HEK293 (cell line): ENCODE measurements at regions of chr9 and their contacts with region 1.

Region 1: GRCh38 chr9:33473643-33474352 is at the start of gene NOL6:
- H3K4me3 ChIP-seq: peak within 1 kb of the TSS; percentile 91
- H3K27ac ChIP-seq: no peak within 1 kb of the TSS
- H3K4me1 ChIP-seq: no peaks in the 10 kb centered on the region
- CTCF ChIP-seq: no peak

Region 2: DNA sequence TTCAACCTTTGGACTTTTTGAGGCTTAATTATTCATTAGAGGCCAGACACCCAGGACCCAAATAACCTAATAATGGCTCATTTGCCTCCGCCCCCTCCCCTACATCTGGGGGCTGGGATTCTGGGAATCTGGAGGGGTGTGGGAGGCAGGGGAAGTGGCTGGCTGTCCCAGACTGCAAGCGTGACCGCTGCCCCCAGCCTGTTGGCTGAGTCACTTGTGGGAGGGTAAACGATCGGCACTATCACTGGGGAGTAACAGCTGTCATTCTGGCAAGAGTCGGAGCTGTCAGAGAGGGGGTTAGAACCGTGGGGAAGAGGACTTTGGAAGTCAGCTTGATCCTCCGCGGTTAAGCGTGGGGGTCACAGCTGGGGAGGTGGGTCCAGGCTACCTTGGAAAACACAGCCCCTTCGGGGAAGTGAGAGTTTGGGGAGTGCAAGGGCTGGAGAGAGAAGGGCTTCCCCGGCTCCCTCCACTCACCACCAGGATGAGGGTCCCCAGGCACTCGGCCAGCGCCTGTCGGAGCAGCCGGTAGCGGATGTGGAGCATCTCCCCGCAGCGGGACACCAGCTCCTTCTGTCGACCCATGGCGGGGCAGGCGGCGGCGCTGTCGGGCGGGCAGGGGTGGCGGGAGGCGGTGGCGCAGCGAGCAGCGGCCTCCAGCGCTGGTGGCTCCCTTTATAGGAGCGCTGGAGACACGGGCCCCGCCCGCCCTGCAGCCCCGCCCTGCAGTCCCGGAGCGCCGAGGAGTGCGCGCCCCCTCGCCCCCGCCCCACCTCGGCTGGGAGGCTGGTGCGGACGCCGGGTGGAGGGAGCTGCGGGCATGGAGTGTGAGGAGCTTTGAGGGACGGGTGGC is 26.6 kb before region 1 on chr9 and contains the start of gene AQP3:
- CTCF ChIA-PET with region 1: interaction called, 176 read pairs
- POLR2A ChIA-PET with region 1: interaction called, 15 read pairs
- H3K4me3 ChIP-seq: peak within 1 kb of the TSS; percentile 46
- H3K27ac ChIP-seq: no peak within 1 kb of the TSS; the same call in 1 of the 2 replicates
- H3K4me1 ChIP-seq: no peaks in the 10 kb centered on the region; the same call in 1 of the 2 replicates
- CTCF ChIP-seq: peak; percentile 59

Region 3: GRCh38 chr9:33489066-33489465 is 15.3 kb after region 1 on chr9:
- CTCF ChIA-PET with region 1: interaction called, 13 read pairs
- POLR2A ChIA-PET with region 1: interaction called, 10 read pairs
- H3K4me3 ChIP-seq: no peak overlapping the region
- H3K27ac ChIP-seq: no peak overlapping the region
- H3K4me1 ChIP-seq: 0 out of 2 replicates have a peak, but pooled peaks cover 3% of the 10 kb centered on the region
- CTCF ChIP-seq: no peak

Region 4: GRCh38 chr9:33517373-33517772 is 43.6 kb after region 1 on chr9:
- CTCF ChIA-PET with region 1: interaction called, 21 read pairs
- POLR2A ChIA-PET with region 1: interaction called, 34 read pairs
- H3K4me3 ChIP-seq: no peak overlapping the region
- H3K27ac ChIP-seq: no peak overlapping the region
- H3K4me1 ChIP-seq: no peaks in the 10 kb centered on the region
- CTCF ChIP-seq: no peak

Region 5: DNA sequence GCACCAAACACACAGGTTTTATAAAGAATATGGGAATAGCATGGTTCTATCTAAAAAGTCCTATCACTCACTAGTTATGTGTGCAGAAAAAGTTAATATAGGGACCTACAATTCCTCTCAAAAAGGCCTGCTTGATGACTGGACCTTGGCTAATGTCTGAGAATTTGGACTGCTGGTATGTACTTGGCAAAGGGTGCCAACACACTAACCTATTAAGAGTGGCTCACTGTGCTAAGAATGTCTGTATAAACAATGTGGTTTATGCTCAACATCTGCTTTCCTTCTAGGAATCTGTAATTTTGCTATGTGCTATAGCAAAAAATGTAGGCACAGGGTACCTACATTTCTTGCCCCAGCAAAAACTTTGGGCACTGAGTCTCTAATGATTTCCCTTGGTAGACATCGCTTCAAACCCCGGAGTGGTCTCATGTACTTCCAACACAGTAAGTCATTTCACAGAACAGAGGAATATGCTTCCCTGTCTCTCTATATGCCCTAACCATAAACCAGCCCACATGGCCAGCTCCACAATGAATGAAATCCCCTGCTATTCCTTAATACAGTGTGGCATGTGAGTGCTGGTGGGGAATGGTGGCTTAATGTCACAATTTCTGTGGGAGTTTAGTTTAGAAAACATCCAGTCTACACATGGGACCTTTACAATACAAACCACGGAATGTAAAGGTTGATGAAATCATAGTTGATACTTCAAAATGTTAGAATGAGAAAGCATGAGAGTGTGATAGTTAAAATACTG is 473.2 kb after region 1 on chr9:
- CTCF ChIA-PET with region 1: no interaction called
- POLR2A ChIA-PET with region 1: no interaction called
- H3K4me3 ChIP-seq: no peak overlapping the region
- H3K27ac ChIP-seq: no peak overlapping the region
- H3K4me1 ChIP-seq: no peaks in the 10 kb centered on the region
- CTCF ChIP-seq: no peak